Panc1 (cell line): ENCODE measurements at regions of chr12 and their contacts with region 1.

Region 1: DNA sequence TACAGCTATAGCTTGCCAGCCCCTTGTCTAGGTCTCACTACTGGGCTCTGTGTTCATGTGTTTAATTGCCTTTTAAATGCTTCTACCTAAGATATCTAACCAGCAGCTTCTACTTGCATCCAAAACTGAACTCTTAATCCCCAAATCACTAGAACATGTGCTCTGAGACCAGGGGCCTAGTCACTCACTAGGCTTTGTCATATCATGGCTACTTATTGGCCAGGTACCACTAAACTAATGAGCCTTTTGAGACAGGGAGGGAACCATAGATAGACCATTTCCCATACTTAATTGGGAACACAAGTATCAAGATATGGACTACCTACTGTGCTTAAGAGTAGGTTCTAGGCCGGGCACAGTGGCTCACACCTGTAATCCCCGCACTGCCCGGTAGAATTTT is 6.5 kb downstream of the HSP90B1 start:
- DNase-seq: no peak
- ATAC-seq: peak; percentile 27; the same call in 1 of the 2 replicates
- H3K4me3 ChIP-seq: no peak overlapping the region
- H3K27ac ChIP-seq: no peak overlapping the region
- H3K4me1 ChIP-seq: peaks cover 16% of the 10 kb centered on the region
- H3K27me3 ChIP-seq: no peaks in the 10 kb centered on the region
- CTCF ChIP-seq: no peak

Region 2: DNA sequence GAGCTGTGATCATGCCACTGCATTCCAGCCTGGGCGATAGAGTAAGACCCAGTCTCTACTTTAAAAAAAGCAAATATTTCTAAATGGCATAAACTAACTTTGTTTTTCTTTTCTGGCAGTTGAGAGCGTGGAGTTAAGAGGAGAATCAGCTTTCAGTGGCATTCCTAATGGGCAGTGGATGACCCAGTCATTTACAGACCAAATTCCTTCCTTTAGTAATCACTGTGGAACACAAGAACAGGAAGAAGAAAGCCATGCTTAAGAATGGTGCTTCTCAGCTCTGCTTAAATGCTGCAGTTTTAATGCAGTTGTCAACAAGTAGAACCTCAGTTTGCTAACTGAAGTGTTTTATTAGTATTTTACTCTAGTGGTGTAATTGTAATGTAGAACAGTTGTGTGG is 50.1 kb after region 1 on chr12:
- CTCF ChIA-PET with region 1: no interaction called
- POLR2A ChIA-PET with region 1: no interaction called
- in situ Hi-C with region 1: no loop called
- intact Hi-C with region 1: no loop called
- DNase-seq: no peak
- ATAC-seq: no peak
- H3K4me3 ChIP-seq: no peak overlapping the region
- H3K27ac ChIP-seq: no peak overlapping the region
- H3K4me1 ChIP-seq: no peaks in the 10 kb centered on the region
- H3K27me3 ChIP-seq: no peaks in the 10 kb centered on the region
- CTCF ChIP-seq: no peak

Region 3: DNA sequence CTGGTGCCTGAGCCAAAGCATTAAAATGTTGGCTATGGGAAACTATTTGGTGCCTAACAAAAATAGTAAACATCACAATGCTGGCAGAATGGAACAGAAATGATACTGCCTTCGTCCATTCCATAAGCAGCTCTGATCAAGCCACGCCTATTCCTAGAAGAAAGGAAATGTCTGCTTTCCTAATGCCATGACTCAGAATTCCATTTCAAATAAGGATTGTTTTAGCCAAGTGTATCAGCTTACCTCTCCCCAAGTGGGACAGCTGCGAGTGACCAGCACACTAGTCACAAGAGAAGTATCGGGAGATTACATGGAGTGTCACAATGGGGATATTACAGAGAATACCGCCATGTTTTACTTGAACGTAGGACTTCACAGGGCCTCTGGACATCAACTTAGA is 74.6 kb after region 1 on chr12:
- CTCF ChIA-PET with region 1: no interaction called
- POLR2A ChIA-PET with region 1: no interaction called
- in situ Hi-C with region 1: no loop called
- intact Hi-C with region 1: no loop called
- DNase-seq: peak; percentile 12
- ATAC-seq: no peak
- H3K4me3 ChIP-seq: no peak overlapping the region
- H3K27ac ChIP-seq: no peak overlapping the region
- H3K4me1 ChIP-seq: no peaks in the 10 kb centered on the region
- H3K27me3 ChIP-seq: no peaks in the 10 kb centered on the region
- CTCF ChIP-seq: no peak

Region 4: GRCh38 chr12:104132351-104132956 is 195.8 kb after region 1 on chr12:
- CTCF ChIA-PET with region 1: no interaction called
- POLR2A ChIA-PET with region 1: interaction called, 13 read pairs
- in situ Hi-C with region 1: no loop called
- intact Hi-C with region 1: no loop called
- DNase-seq: no peak
- ATAC-seq: no peak
- H3K4me3 ChIP-seq: no peak overlapping the region
- H3K27ac ChIP-seq: no peak overlapping the region
- H3K4me1 ChIP-seq: peaks cover 17% of the 10 kb centered on the region
- H3K27me3 ChIP-seq: no peaks in the 10 kb centered on the region
- CTCF ChIP-seq: no peak